ENCODE measurements at regions of chr22 and their contacts with region 1.

Region 1: GRCh38 chr22:37316875-37317371 is 34.6 kb downstream of the CYTH4 start:
- DNase-seq: peak; percentile 79
- H3K4me3 Mint-ChIP-seq: no peak overlapping the region
- H3K27ac Mint-ChIP-seq: no peak overlapping the region
- H3K4me1 Mint-ChIP-seq: peaks cover 37% of the 10 kb centered on the region
- H3K27me3 Mint-ChIP-seq: peaks cover 10% of the 10 kb centered on the region

Region 2: DNA sequence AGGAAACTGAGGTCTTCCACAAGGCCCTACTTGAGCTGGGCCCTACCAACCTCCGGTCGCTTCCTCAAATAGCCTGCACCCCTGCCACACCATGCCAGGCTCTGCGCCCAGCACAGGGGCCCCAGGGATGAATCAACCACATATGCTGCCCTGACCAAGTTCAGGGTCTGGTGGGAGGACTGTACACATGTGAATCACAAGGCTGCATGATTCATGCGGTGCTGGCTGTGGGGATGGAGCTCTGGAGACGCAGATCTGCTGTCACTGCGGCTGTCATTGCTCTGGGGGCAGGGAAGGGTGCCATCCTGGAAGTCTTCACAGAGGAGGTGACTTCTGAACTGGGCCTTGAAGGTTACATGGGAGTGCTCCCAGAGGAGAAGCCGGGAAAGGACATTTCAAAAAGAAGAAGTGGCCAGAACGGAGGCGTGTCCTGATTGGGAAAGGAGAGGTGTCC is 13.1 kb before region 1 on chr22:
- CTCF ChIA-PET with region 1: interaction called, 11 read pairs
- POLR2A ChIA-PET with region 1: interaction called, 6 read pairs
- DNase-seq: peak; percentile 75
- H3K4me3 Mint-ChIP-seq: no peak overlapping the region
- H3K27ac Mint-ChIP-seq: peak overlapping the region; percentile 90
- H3K4me1 Mint-ChIP-seq: peaks cover 97% of the 10 kb centered on the region
- H3K27me3 Mint-ChIP-seq: no peaks in the 10 kb centered on the region

Region 3: DNA sequence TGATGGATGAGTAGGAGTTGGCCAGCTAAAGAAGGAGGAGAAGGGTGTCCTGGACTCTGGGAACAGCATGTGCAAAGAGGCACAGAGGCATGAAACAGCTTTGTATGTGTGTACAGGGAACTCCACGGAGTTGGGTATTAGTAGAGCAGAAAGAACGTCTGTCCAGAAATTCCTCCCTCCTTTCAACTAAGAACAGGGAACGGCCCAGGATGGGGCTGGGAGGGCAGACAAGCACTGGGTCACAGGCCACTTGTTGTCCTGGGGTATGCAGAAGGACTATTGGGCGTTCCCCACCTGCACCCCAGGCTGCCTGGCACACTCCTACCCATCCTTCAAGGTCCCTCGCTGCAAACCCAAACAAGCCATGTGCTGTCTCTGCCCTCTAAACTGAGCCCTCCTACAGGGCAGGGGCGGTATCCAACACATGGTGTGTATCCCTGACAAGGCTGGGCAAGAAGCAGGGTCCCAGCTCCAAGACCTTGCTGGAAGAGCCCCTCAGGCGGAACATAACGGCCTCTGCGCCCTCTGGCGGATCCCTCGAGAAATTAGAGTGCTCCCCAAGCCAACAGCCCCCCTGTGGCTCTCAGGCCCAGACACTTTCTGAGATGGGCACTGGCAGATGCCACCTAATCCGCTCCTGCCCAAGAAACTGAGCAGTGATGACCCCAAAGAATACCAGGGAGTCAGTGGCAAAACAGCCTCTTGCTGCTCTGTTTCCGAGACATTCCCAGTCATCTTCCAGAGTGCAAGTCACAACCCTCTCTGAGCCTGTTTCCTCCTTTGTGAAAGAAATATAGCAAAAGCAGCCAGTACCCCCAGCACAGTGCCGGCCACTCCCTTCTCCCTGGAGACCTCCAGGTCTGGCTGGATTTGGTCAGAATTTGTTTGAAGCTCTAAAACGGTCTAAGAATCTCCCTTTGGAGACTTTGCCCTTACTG is 112.0 kb after region 1 on chr22:
- CTCF ChIA-PET with region 1: interaction called, 12 read pairs
- POLR2A ChIA-PET with region 1: interaction called, 7 read pairs
- DNase-seq: peak; percentile 57
- H3K4me3 Mint-ChIP-seq: no peak overlapping the region
- H3K27ac Mint-ChIP-seq: no peak overlapping the region
- H3K4me1 Mint-ChIP-seq: peaks cover 36% of the 10 kb centered on the region
- H3K27me3 Mint-ChIP-seq: peaks cover 60% of the 10 kb centered on the region

Region 4: DNA sequence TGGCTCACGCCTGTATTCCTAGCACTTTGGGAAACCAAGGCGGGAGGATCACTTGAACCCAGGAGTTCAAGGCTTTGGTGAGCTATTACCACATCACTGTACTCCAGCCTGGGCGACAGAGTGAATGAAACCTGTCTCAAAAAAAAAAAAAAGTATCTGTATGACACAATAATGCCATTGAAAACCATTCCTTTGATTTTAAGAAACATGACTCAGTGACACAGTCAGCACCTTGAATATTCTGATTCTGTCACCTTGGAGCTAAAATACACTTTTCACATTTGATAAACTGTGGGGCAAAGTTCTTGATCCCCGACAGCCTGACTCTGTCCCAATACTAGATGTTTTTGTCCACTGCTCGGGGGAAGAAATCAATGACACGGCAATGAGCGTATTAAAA is 127.1 kb after region 1 on chr22:
- CTCF ChIA-PET with region 1: no interaction called
- POLR2A ChIA-PET with region 1: no interaction called
- DNase-seq: no peak
- H3K4me3 Mint-ChIP-seq: no peak overlapping the region
- H3K27ac Mint-ChIP-seq: no peak overlapping the region
- H3K4me1 Mint-ChIP-seq: peaks cover 15% of the 10 kb centered on the region
- H3K27me3 Mint-ChIP-seq: peaks cover 3% of the 10 kb centered on the region

Region 5: GRCh38 chr22:37457093-37457893 is 140.4 kb after region 1 on chr22:
- CTCF ChIA-PET with region 1: interaction called, 53 read pairs
- POLR2A ChIA-PET with region 1: interaction called, 17 read pairs
- DNase-seq: peak; percentile 87
- H3K4me3 Mint-ChIP-seq: no peak overlapping the region
- H3K27ac Mint-ChIP-seq: no peak overlapping the region
- H3K4me1 Mint-ChIP-seq: peaks cover 4% of the 10 kb centered on the region
- H3K27me3 Mint-ChIP-seq: no peaks in the 10 kb centered on the region